Heart right ventricle (tissue), 16 donors: ENCODE measurements at regions of chr15 and their contacts with region 1.

Region 1: DNA sequence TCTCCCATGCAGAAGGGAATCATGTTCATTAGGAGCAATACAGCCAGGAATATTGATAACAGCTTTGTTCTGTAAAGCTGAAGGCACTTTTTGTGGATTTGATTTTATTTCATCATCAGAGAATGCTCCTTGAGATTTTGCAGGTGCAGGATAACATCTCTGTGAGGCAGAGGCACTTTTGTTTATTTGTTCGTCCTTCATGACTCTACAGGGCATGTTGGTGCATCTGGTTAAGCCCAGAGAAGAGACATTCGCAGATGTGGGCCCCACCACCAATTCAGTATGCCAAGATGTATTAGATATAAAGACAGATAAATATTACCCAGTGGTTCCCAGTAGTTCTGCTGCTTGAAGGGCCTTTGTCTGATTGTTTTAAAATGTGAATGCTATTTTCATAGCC is 368.1 kb upstream of the SEMA6D start:
- DNase-seq: no peak
- ATAC-seq: no peak
- H3K4me3 ChIP-seq: no peak overlapping the region
- H3K27ac ChIP-seq: no peak overlapping the region
- H3K4me1 ChIP-seq: no peaks in the 10 kb centered on the region
- H3K27me3 ChIP-seq: no peaks in the 10 kb centered on the region
- CTCF ChIP-seq: no peak

Region 2: DNA sequence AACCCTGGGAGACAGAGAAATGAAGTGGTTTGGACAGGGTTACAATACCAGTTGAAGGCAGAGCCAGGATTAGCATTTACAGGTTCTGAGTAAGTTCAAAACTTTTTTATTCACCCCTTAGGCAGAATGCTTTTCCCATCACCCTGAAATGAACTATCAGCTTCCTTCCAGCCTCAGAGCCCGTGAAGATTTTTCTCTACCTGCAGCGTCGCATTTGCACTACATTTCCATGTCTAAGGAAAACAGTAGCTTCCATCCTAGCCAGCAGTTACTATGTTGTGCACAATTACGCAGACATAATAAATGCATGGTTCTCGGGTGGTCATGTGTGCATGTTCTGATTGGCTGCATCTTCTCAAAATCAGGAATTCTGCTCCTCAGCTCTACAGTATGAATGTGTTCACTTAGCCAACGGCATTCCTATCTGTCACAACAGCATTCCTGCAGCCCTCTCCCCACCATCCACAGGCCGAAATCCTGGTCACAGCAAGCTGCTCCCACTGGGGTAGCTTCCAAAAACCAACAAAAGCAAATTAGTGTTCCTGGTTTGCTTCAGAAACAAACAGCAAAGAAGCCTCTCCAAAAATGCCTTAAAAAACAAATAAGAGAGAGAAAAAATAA is 142.7 kb before region 1 on chr15:
- intact Hi-C with region 1: loop called in 1 of 10 experiments (anchors 5 kb)
- DNase-seq: no peak
- ATAC-seq: no peak
- H3K4me3 ChIP-seq: no peak overlapping the region
- H3K27ac ChIP-seq: no peak overlapping the region
- H3K4me1 ChIP-seq: no peaks in the 10 kb centered on the region
- H3K27me3 ChIP-seq: no peaks in the 10 kb centered on the region
- CTCF ChIP-seq: no peak